ENCODE measurements at regions of chr4 and their contacts with region 1.

Region 1: GRCh38 chr4:85747882-85748491 is 273.0 kb downstream of the ARHGAP24 start:
- DNase-seq: no peak
- ATAC-seq: peak; percentile 61 to 76 (median 72)
- H3K4me3 ChIP-seq: no peak overlapping the region
- H3K27ac ChIP-seq: no peak overlapping the region
- H3K4me1 ChIP-seq: no peaks in the 10 kb centered on the region
- H3K27me3 ChIP-seq: no peaks in the 10 kb centered on the region
- CTCF ChIP-seq: peak; percentile 76

Region 2: DNA sequence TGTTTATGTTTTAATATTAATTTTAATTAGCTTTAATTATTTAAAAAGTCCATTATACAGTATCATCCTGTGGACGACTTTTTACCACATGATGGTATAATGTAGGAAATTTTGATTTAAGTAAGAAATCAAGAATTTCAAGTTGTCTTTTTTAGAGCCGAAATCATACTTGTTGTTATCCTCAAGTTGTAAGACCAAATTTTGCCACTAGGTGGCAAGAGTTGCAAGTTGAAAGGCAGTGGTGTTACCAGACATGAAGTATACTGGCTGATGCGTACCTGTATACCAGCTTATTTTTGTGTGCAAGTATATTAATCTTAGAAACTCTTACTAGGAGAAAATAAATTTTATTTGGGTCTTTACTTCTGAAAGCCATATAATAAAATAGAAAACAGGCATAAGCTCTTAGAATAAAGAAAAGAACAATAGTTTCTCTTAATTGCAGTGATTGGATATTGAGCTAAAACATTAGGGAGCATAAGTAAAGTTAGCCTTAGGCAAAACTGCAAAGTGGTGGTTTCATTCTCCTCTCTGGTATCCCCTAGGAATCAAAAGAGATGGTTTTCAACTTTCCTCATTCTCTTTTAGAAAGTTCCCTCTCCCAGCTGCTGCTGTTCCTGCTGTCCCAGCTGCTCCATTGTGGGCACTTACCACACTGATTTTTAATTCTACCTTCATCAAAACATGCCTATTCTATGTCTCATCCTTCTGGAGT is 663.5 kb before region 1 on chr4:
- intact Hi-C with region 1: loop called in 1 of 2 experiments (anchors 2 kb)
- DNase-seq: no peak
- ATAC-seq: peak in 2 of 4 donors; percentile 47 to 56
- H3K4me3 ChIP-seq: no peak overlapping the region
- H3K27ac ChIP-seq: no peak overlapping the region
- H3K4me1 ChIP-seq: no peaks in the 10 kb centered on the region
- H3K27me3 ChIP-seq: no peaks in the 10 kb centered on the region
- CTCF ChIP-seq: peak; percentile 68

Region 3: DNA sequence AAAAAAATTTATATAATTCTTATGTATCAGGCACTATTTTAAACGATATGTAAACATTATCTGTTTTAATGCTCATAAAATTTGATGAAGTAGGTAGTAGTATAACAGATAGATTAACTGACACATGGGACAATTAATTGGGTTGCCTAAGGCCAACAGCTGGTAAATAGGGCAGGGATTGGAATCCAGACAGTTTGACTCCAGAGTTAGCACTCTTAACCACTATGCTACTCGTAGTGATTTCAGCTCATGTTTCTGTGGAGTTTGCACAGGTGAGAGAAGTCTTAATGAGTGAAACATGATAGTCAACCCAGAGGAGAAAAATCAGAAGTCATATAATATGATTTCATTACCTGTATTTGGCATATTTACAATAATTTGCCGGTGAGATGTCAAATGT is 655.5 kb before region 1 on chr4:
- intact Hi-C with region 1: loop called in 1 of 2 experiments (anchors 10 kb)
- DNase-seq: no peak
- ATAC-seq: no peak
- H3K4me3 ChIP-seq: no peak overlapping the region
- H3K27ac ChIP-seq: no peak overlapping the region
- H3K4me1 ChIP-seq: no peaks in the 10 kb centered on the region
- H3K27me3 ChIP-seq: no peaks in the 10 kb centered on the region
- CTCF ChIP-seq: no peak

Region 4: DNA sequence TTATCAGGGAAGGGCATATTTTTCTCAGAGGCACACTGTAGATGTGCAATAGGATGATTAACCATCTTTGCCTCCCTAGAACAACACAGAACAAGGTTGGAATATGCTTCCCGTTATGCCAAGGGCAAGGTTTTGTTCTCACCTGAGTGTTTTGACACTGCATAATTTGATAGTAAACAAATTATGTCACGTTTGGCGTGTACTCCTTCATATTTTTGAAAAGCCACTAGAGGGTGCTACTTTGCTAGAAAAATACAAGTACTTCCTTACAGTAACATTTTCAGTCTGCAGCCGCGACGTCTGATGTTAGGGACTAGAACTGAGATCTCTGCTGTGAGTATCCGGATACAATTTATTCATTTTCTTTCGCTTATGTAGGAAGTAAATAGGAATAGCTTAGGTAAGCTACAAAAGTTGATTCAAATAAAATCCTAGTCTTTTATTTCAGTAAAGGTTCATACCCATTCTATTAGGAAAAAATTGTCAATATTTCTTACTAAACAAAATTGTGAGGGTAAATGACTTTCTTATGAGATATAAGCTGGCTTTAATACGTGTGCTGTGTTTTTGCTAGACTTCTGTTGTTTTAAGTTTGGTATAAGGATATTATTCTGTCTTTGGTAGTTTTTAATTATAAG is 600.4 kb before region 1 on chr4:
- intact Hi-C with region 1: loop called (anchors 2 to 5 kb)
- DNase-seq: peak in 1 of 2 donors; percentile 54
- ATAC-seq: peak in 2 of 4 donors; percentile 57 to 79
- H3K4me3 ChIP-seq: peak overlapping the region; percentile 16
- H3K27ac ChIP-seq: no peak overlapping the region
- H3K4me1 ChIP-seq: no peaks in the 10 kb centered on the region
- H3K27me3 ChIP-seq: no peaks in the 10 kb centered on the region
- CTCF ChIP-seq: peak; percentile 61

Region 5: DNA sequence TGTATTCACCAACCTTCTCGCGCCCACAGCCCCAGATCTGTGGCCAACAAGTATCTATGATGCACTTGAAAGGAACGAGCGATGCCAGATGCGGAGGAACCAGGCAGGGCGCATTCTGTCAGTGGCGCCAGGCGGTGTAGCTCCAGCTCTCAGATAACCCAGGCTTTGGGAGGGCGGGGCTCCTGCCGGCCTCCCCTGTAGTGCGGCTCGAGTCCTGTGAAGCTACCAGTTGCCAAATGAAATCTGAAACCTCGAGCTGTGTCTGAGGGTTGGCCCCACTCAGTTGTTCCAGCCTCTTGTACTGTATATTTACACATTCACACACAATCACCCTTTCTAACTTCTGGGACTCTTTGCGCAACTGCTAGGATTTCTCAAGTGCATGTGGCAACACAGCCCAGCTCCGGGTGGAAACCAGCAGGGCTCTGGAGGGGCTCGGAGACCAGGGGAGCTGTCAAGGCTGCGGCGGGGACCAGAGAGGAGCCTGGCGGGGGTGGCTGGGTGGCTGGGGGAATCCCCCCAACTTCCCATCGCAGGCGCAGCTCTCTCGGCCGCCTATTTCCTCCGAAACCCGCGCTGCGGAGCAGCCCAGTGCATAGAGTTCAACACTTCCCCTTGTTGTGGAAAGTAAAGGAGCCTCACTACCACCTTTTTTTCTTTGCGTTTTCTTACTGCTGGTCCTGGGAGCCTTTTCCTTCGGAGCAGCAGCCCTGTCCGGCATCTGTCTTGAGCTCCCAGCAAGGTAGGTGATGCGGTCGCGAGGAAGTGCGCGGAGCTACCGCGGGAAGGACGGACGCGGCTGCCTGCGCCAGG is 273.0 kb before region 1 on chr4 and contains the start of gene ARHGAP24:
- intact Hi-C with region 1: loop called in 1 of 2 experiments (anchors 10 kb)
- DNase-seq: peak; percentile 78 to 87
- ATAC-seq: peak; percentile 89 to 96 (median 94)
- H3K4me3 ChIP-seq: peak within 1 kb of the TSS; percentile 69
- H3K27ac ChIP-seq: peak within 1 kb of the TSS; percentile 47
- H3K4me1 ChIP-seq: peaks cover 5% of the 10 kb centered on the region
- H3K27me3 ChIP-seq: no peaks in the 10 kb centered on the region
- CTCF ChIP-seq: no peak
- total RNA-seq, gene ARHGAP24: 2.3 to 25.7 (median 4.8) TPM

Region 6: DNA sequence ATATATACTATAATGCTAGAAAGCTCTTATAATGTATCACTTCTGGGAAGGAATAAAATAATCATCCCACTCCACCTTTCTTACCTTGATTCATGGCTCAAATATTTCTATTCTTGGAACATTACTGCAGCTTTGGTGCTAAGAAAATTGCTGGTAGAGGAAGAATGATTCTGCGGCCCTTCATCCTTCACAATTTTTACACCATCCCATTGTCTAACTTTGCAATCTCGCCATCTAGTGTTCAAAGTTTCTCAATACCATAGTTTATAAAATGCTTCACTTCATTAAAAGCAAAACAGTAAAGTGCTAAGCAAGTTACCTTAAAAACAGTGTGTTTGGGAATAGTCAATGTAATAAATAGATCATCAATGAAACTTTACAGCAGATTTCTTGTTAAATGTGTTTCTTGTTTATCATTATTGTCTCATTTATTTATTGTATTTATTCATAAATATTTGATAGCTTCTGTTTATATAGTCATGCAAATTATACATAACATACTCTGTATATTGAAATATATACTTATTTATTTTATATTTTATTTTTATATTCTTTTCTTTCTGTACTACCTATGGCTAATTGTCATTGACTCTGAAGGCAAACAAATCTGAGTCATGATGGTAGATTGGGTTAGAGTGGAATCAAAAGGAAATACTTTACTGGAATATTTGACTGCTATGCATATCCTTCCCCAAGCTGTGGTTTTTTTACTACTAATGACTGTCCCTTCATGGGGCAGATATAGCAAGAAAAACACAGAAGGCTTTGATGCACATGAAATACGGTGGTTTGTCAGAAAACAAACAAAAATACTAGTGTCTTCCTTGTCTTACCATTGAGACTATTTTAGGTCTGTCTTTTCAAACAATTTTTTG is 221.2 kb after region 1 on chr4:
- intact Hi-C with region 1: loop called in 1 of 2 experiments (anchors 5 kb)
- DNase-seq: no peak
- ATAC-seq: peak; percentile 38 to 77 (median 50)
- H3K4me3 ChIP-seq: no peak overlapping the region
- H3K27ac ChIP-seq: no peak overlapping the region
- H3K4me1 ChIP-seq: peaks cover 8% of the 10 kb centered on the region
- H3K27me3 ChIP-seq: no peaks in the 10 kb centered on the region
- CTCF ChIP-seq: peak; percentile 61

Measured in psoas muscle (tissue), 8 donors.